ENCODE measurements at regions of chr14 and their contacts with region 1.

Region 1: GRCh38 chr14:62162998-62163589 is 400.9 kb downstream of the SNAPC1 start:
- DNase-seq: peak; percentile 19
- H3K4me3 ChIP-seq: no peak overlapping the region
- H3K27ac ChIP-seq: no peak overlapping the region
- H3K4me1 ChIP-seq: no peaks in the 10 kb centered on the region
- H3K27me3 ChIP-seq: peaks cover 2% of the 10 kb centered on the region
- CTCF ChIP-seq: peak; percentile 87

Region 2: GRCh38 chr14:62179367-62180018 is 16.4 kb after region 1 on chr14:
- CTCF ChIA-PET with region 1: no interaction called
- dilution Hi-C with region 1: no loop called
- in situ Hi-C with region 1: no loop called
- intact Hi-C with region 1: no loop called
- DNase-seq: peak; percentile 66
- H3K4me3 ChIP-seq: no peak overlapping the region
- H3K27ac ChIP-seq: no peak overlapping the region
- H3K4me1 ChIP-seq: no peaks in the 10 kb centered on the region
- H3K27me3 ChIP-seq: no peaks in the 10 kb centered on the region
- CTCF ChIP-seq: peak; percentile 67 to 81

Region 3: GRCh38 chr14:62420847-62421246 is 257.8 kb after region 1 on chr14:
- CTCF ChIA-PET with region 1: no interaction called
- dilution Hi-C with region 1: no loop called
- in situ Hi-C with region 1: no loop called
- intact Hi-C with region 1: no loop called
- DNase-seq: no peak
- H3K4me3 ChIP-seq: no peak overlapping the region
- H3K27ac ChIP-seq: no peak overlapping the region
- H3K4me1 ChIP-seq: no peaks in the 10 kb centered on the region
- H3K27me3 ChIP-seq: no peaks in the 10 kb centered on the region
- CTCF ChIP-seq: no peak

Region 4: GRCh38 chr14:62667421-62667921 is 504.4 kb after region 1 on chr14:
- CTCF ChIA-PET with region 1: no interaction called
- dilution Hi-C with region 1: no loop called
- in situ Hi-C with region 1: no loop called
- intact Hi-C with region 1: no loop called
- DNase-seq: no peak
- H3K4me3 ChIP-seq: no peak overlapping the region
- H3K27ac ChIP-seq: no peak overlapping the region
- H3K4me1 ChIP-seq: no peaks in the 10 kb centered on the region
- H3K27me3 ChIP-seq: no peaks in the 10 kb centered on the region
- CTCF ChIP-seq: no peak

Region 5: DNA sequence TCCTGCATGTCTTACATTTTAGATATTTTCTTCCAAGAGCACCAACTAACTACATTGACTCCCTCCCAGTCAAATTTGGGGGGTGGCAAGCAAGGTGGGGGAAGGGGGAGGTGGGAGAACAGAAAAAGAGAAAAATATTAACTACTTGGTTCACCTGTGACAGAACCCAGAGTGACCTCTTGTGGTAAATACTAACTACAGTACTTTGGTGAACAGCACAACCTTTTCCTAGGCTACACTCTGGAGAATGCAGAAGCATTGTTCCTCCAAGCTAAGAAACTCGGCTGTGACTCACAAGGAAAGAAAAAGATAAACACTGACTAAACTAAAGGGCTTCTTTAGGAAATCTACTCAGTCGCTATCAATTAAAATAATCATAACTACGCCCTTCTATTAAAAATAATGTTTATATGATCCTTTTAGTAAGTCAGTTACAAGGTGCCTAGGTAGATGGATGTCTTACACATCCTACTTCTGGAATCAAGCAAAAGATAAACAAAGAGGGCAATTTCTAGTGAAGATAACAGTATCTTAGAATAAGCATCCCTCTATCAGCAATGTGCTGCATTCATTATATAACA is 876.8 kb after region 1 on chr14:
- CTCF ChIA-PET with region 1: no interaction called
- dilution Hi-C with region 1: no loop called
- in situ Hi-C with region 1: no loop called
- intact Hi-C with region 1: loop called (anchors 5 kb)
- DNase-seq: peak; percentile 74
- H3K4me3 ChIP-seq: no peak overlapping the region
- H3K27ac ChIP-seq: no peak overlapping the region
- H3K4me1 ChIP-seq: no peaks in the 10 kb centered on the region
- H3K27me3 ChIP-seq: no peaks in the 10 kb centered on the region
- CTCF ChIP-seq: peak; percentile 40 to 65

Region 6: DNA sequence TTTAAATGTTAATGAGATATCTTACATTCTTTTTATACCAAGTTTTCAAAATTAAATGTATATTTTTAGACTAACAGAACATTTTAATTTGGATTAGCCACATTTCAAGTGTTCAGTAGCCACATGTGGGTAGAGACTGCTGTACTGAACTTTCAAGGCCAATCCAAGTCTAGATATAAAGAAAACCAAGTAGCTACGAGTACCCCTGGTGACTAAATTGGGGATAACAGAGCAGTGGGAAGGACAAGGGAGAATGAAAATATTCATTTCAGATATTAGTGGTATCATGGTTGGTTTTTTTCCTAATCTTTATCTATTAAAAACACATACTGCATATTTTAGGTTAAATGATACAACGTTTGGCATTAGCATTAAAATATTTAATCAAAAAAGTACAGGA is 971.7 kb after region 1 on chr14:
- CTCF ChIA-PET with region 1: no interaction called
- dilution Hi-C with region 1: no loop called
- in situ Hi-C with region 1: loop called in 1 of 2 experiments (anchors 25 kb)
- intact Hi-C with region 1: no loop called
- DNase-seq: no peak
- H3K4me3 ChIP-seq: no peak overlapping the region
- H3K27ac ChIP-seq: no peak overlapping the region
- H3K4me1 ChIP-seq: no peaks in the 10 kb centered on the region
- H3K27me3 ChIP-seq: no peaks in the 10 kb centered on the region
- CTCF ChIP-seq: peak; percentile 39 to 41

Region 7: DNA sequence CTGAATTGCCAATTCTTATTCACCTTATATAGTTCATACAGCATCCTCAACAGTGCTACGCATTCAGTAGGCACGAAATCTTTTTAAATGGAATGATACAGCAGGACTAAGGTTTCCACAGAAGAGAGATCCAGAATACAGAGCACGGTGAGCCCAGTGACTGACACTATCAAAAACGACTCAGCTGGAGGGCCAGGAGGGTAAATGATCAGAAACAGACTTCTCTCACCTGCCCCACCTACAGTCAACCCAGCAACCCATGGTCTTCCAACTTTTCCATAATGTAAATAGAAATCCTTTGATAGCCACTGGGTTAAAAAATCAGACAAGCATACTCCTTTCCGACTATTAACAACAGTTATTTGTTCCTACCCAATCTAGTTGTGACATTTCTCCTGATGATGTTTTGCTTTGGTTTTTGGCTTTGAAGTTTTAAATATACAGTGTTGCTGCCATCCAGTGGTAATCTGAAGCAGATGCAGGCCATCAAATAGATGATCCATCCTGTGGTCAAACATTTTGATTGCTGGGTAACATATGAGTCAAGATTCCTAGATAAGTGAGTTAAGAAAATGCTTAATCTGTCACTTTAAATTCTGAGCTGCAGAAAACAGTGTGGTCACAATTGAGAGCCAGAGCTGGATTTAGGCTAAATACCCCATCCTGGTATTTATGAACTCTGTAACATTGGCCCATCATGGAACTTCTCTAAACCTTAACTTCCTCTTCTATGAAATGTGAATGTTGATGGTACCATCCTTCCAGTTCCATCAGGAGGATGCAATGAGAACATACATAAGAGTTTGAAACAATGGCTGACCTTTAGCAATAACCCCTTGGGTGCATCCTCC is 1113.6 kb after region 1 on chr14:
- CTCF ChIA-PET with region 1: no interaction called
- dilution Hi-C with region 1: no loop called
- in situ Hi-C with region 1: no loop called
- intact Hi-C with region 1: loop called (anchors 1 kb)
- DNase-seq: peak; percentile 65
- H3K4me3 ChIP-seq: no peak overlapping the region
- H3K27ac ChIP-seq: no peak overlapping the region
- H3K4me1 ChIP-seq: no peaks in the 10 kb centered on the region
- H3K27me3 ChIP-seq: no peaks in the 10 kb centered on the region
- CTCF ChIP-seq: peak; percentile 75 to 86

Region 8: GRCh38 chr14:63375771-63376170 is 1212.7 kb after region 1 on chr14:
- CTCF ChIA-PET with region 1: no interaction called
- dilution Hi-C with region 1: no loop called
- in situ Hi-C with region 1: no loop called
- intact Hi-C with region 1: loop called (anchors 5 kb)
- DNase-seq: peak; percentile 63
- H3K4me3 ChIP-seq: no peak overlapping the region
- H3K27ac ChIP-seq: no peak overlapping the region
- H3K4me1 ChIP-seq: no peaks in the 10 kb centered on the region
- H3K27me3 ChIP-seq: no peaks in the 10 kb centered on the region
- CTCF ChIP-seq: no peak

Measured in mammary epithelial cell (primary cell).